Panc1 (cell line): ENCODE measurements at regions of chr22 and their contacts with region 1.

Region 1: DNA sequence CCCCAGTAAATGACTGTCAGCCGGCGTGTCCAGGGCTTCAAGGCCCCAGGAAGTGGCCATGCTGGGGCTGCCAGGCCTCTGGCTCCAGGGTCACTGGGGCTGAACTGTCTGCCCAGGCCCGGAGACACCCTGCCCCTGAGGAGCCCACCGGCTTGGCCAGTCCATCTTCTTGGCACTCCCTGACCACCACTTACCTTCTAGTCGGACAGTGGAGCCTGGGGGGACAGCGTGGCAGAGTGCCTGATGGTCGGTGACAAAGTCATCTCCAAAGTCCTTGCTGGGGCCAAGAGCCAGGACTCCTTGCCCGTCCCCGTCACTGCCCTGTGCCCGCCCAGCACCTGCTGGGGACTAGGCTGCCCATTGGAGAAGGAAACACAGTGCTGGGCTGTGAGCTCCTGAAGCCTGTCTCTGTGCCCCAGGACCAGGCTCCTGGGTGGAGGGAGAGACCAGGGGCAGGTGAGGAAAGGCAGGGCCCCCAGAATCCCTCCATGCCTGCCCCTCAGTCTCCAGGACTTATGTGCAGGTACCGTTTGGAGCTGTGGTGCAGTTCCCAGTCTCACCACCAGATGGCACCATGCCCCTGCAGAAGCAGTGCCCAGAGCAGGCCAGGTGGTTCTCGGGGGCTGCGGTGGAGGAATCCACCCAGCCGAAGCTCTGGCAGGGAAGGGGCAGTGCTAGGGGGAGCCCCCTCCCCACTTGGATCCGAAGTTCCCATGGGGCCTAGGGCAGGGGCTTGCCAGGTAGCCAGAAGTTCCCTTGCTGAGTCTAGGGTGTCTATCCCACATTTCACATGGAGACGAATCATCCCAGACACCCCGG is 6.0 kb upstream of the CCDC188 start:
- DNase-seq: peak; percentile 64
- ATAC-seq: peak; percentile 92
- H3K4me3 ChIP-seq: no peak overlapping the region
- H3K27ac ChIP-seq: no peak overlapping the region
- H3K4me1 ChIP-seq: no peaks in the 10 kb centered on the region
- H3K27me3 ChIP-seq: no peaks in the 10 kb centered on the region
- CTCF ChIP-seq: peak; percentile 89

Region 2: DNA sequence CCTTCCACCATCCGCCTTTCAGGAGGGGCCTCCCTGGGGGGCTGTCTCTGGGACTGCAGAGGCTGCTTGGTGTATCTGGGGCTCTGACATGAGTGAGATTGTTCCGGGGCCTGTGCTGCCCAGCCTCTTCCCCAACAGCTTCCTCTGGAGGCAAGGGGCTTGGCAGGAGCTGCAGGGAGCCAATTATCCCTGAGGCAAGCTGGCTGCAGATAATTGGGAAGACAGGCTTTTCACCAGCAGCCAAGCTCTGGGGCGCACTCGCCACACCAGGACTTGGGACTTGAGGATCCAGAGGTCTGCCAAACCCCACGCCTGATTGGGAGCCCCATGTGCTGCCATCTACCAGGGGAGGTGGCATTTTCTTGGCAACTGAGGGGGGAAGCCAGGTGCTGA is 126.8 kb after region 1 on chr22:
- CTCF ChIA-PET with region 1: interaction called, 3 read pairs
- POLR2A ChIA-PET with region 1: no interaction called
- in situ Hi-C with region 1: no loop called
- intact Hi-C with region 1: loop called (anchors 2 kb)
- DNase-seq: no peak
- ATAC-seq: no peak
- H3K4me3 ChIP-seq: no peak overlapping the region
- H3K27ac ChIP-seq: no peak overlapping the region
- H3K4me1 ChIP-seq: no peaks in the 10 kb centered on the region
- H3K27me3 ChIP-seq: no peaks in the 10 kb centered on the region
- CTCF ChIP-seq: no peak